ENCODE measurements at regions of chr17 and their contacts with region 1.

Region 1: DNA sequence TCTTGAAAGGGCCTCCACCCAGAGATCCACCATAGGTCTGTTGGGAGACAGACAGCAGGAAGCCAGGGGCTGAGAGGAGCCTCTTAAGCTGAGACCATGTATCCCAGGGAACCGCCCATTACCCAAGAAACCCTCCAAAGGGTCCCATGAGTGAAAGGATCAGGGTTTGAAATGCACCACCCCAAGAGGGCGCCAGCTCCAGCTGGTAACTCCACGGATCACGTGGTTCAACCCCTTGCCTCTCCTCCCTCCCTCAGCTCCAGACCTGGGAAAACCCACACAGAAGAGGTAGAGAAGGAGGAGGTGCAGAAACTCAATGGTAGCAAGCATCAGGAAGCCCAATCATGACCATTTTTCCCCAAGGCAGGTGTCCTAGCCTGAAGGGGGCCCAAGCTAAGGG is 148.7 kb downstream of the AIPL1 start:
- DNase-seq: peak; percentile 40
- ATAC-seq: peak; percentile 88
- H3K4me3 ChIP-seq: no peak overlapping the region
- H3K27ac ChIP-seq: no peak overlapping the region
- H3K4me1 ChIP-seq: peaks cover 0 to 3% of the 10 kb centered on the region in 2 experiments; a peak in 2 of 4 replicates
- H3K27me3 ChIP-seq: peaks cover 38% of the 10 kb centered on the region
- CTCF ChIP-seq: peak; percentile 46 to 62 (median 58); a peak in 5 of 6 replicates
- POLR2A ChIP-seq: no peak
- RAD21 ChIP-seq: peak; percentile 61

Region 2: GRCh38 chr17:6343736-6344135 is 57.5 kb after region 1 on chr17:
- CTCF ChIA-PET with region 1: no interaction called
- POLR2A ChIA-PET with region 1: no interaction called
- RAD21 ChIA-PET with region 1: no interaction called
- intact Hi-C with region 1: loop called (anchors 5 kb)
- DNase-seq: no peak
- ATAC-seq: no peak
- H3K4me3 ChIP-seq: no peak overlapping the region
- H3K27ac ChIP-seq: no peak overlapping the region
- H3K4me1 ChIP-seq: no peaks in the 10 kb centered on the region
- H3K27me3 ChIP-seq: peaks cover 50% of the 10 kb centered on the region
- CTCF ChIP-seq: no peak
- POLR2A ChIP-seq: no peak
- RAD21 ChIP-seq: no peak

Region 3: DNA sequence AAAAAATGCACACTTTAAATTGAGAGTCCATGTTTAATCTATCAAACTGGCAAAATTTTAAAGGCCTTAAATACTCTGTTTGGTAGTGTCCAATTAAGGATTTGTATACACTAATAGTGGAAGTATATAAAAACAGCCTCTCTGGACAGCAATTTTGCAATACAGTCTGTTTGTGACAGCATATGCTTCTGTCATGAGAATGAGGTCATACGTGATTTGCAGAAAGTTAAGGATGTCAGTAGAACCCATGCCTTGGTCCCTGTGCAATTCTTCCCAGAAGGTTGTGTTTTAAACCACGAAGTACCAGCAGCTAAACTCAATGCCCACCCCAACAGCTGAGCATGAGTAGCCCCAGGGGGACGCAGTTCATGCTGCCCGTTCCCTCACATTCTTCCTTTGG is 70.3 kb after region 1 on chr17:
- CTCF ChIA-PET with region 1: no interaction called
- POLR2A ChIA-PET with region 1: no interaction called
- RAD21 ChIA-PET with region 1: no interaction called
- intact Hi-C with region 1: no loop called
- DNase-seq: no peak
- ATAC-seq: no peak
- H3K4me3 ChIP-seq: no peak overlapping the region
- H3K27ac ChIP-seq: no peak overlapping the region
- H3K4me1 ChIP-seq: no peaks in the 10 kb centered on the region
- H3K27me3 ChIP-seq: peaks cover 9% of the 10 kb centered on the region
- CTCF ChIP-seq: no peak
- POLR2A ChIP-seq: no peak
- RAD21 ChIP-seq: no peak

Region 4: DNA sequence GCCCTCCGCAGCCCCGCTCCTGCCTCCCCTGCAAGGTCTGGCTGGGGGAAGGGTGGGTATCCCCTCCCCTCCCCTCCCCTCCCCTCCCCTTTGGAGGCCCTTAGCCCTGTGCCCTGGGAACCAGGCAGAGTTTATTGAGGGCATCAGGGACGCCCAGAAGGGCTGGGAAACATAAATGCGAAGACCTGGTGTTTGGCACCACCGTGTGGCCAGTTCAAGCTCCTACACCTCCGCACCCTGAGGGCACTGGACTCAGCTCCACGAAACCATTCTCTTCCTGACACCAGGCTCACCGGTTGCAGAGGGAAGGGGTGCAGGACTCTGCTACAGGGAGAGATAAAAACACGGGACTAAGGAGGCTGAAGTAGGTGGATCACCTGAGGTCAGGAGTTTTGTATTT is 149.7 kb after region 1 on chr17:
- CTCF ChIA-PET with region 1: interaction called, 10 read pairs
- POLR2A ChIA-PET with region 1: no interaction called
- RAD21 ChIA-PET with region 1: interaction called in 1 of 2 experiments, 3 read pairs
- intact Hi-C with region 1: no loop called
- DNase-seq: peak; percentile 46
- ATAC-seq: peak; percentile 97
- H3K4me3 ChIP-seq: no peak overlapping the region
- H3K27ac ChIP-seq: no peak overlapping the region
- H3K4me1 ChIP-seq: no peaks in the 10 kb centered on the region; a peak in 1 of 4 replicates
- H3K27me3 ChIP-seq: no peaks in the 10 kb centered on the region
- CTCF ChIP-seq: peak; percentile 57 to 85 (median 84); a peak in 5 of 6 replicates
- POLR2A ChIP-seq: no peak
- RAD21 ChIP-seq: peak; percentile 81

Region 5: DNA sequence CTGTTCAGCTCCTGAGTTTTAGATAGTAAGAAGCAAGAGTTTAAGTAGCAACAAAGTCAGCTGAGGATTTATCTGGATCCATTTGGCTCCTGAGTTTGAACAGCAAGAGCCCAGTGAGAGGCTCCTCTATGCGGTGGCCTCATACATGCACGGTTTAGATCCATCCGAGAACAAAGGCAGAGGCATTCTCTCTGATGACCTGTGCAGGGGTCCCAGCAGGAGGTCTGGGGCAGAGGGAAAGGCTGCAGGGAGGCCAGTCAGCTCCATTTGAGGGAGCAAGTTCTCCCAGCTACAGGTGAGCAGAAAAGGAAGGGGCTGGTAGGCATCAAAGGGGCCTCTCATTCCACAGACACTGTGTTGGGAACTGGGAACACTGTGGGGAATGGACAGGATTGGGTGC is 253.6 kb after region 1 on chr17:
- CTCF ChIA-PET with region 1: no interaction called
- POLR2A ChIA-PET with region 1: no interaction called
- RAD21 ChIA-PET with region 1: no interaction called
- intact Hi-C with region 1: no loop called
- DNase-seq: no peak
- ATAC-seq: no peak
- H3K4me3 ChIP-seq: no peak overlapping the region
- H3K27ac ChIP-seq: no peak overlapping the region
- H3K4me1 ChIP-seq: no peaks in the 10 kb centered on the region
- H3K27me3 ChIP-seq: no peaks in the 10 kb centered on the region
- CTCF ChIP-seq: no peak
- POLR2A ChIP-seq: no peak
- RAD21 ChIP-seq: no peak

Measured in HCT116 (cell line).